ENCODE measurements at regions of chr1 and their contacts with region 1.

Region 1: GRCh38 chr1:91697416-91697815 is 188.5 kb downstream of the TGFBR3 start:
- DNase-seq: no peak
- ATAC-seq: no peak

Region 2: DNA sequence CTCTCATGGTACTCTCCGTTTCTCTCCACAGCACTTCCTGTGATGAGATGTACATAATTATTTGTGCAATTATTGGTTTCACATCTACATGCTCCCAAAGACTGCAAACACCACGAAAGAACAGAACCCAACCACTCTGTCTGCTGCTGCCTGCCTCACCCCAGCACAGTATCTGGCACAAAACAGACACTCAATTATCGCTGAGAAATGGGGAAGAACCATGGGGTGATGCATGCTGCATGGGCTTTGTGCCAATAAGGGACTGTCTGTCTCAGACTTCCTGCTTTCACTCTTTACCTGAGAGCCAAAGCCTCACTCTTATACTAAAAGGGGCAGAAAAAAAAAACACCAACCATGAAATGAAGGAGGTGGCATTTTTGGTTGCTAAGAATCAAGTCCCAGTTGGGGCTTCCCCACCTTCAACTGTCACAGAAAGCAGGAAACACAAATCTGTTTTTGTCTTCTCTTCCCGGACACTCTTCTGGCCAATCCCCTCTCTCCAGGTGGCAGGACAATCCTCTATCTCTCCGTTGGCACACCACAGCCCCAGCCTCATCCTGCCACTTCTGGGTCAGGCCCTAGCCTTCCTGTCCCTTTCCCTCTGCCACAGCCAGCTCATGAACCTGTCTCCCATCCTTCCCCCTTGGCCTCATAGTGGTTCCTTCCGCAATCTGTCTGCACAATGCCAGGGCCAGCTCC is 106.6 kb after region 1 on chr1:
- intact Hi-C with region 1: no loop called
- DNase-seq: peak in 1 of 2 donors; percentile 46
- ATAC-seq: peak; percentile 78

Region 3: DNA sequence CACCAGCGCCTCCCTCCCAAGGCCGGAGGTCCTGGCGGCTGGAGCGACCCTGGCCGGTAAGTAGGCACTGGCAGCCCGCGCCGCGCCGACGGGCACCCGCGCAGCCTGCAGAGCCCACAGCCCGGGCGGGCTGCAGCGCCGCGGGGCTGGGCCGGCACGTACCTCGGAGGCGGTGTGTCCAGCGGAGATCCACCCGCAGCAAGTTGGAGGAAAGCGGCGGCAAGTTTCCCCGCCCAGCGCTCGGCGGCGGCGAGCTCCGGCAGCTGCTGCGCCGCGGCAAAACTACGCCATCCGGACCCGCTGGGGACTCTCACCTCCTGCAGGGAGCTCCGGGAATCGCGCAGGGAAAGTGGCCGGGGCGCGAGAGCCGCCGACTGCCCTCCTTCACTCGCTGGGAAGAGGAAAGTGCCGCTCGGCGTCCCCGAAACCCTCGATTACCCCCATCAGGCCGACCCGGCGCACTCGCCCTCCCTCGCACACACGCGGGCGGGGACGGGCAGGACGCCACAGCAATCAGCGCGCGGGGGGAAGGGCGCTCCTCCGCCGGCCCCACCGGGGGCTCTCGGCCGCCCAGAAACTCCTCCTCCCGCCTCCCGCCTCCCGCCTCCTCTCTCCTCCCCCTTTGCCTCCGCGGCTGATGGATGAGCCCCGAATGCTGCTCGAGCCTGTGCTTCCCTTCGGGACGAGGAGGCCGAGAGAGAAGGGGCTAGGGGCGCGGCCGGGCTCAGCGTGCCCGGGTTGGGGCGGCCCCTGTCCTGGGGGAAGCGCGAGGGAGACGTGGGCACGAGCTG is 188.5 kb after region 1 on chr1 and contains the start of gene TGFBR3:
- intact Hi-C with region 1: loop called in 1 of 2 experiments (anchors 10 kb)
- DNase-seq: peak; percentile 83 to 87
- ATAC-seq: peak; percentile 82
- total RNA-seq, gene TGFBR3: 14.4 to 27.8 TPM

Measured in left colon (tissue), 2 donors.